ENCODE measurements at regions of chr2 and their contacts with region 1.

Region 1: DNA sequence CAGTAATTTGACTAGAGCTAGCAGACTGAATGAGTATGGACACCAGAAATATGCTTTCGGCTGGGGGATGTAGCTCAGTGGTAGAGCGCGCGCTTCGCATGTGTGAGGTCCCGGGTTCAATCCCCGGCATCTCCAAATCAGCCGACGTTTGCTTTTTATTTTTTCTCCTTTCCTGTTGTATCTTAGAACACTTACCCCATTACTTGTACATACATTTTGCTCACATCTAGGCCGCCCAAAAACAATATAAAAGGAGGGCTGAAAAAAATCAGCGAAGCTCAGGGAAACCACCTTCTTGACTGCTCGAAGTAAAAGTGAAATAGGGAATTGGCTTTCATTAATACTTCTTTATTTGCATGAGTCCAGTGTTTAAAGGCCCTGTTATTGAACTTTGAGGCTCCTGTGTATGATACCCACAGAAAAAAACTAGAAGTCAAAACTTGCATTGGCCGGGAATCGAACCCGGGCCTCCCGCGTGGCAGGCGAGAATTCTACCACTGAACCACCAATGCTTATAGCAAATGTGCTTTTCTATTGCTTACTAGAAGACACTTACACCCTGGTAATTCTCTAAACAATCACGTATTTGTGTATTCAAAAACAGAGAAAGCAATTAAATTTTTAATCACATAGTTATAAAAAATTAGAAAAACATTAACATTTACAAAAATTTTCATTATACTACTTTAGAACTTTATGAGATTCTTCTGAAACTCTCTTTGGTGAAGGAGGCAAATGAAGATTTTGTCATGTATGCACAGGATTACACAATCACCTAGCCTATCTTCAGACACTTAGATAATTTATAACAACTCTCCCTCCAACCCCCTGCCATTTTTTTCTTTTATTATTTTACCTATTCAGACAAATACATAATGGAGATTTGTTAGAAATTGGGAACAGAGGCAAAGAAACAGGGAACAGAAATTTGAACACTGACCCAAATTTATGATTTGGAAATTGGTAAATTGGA is 35.2 kb upstream of the GPD2 start:
- DNase-seq: peak; percentile 66
- ATAC-seq: peak; percentile 91 to 94

Region 2: GRCh38 chr2:156332534-156333273 is 68.3 kb before region 1 on chr2 and contains the start of gene NR4A2:
- intact Hi-C with region 1: loop called in 1 of 2 experiments (anchors 2 kb)
- DNase-seq: peak; percentile 93
- ATAC-seq: peak; percentile 72 to 81
- total RNA-seq, gene NR4A2: 2.4 to 9.2 TPM

Region 3: GRCh38 chr2:156341452-156342253 is 59.3 kb before region 1 on chr2:
- intact Hi-C with region 1: loop called (anchors 2 to 5 kb)
- DNase-seq: peak; percentile 94
- ATAC-seq: peak; percentile 90 to 93

Region 4: DNA sequence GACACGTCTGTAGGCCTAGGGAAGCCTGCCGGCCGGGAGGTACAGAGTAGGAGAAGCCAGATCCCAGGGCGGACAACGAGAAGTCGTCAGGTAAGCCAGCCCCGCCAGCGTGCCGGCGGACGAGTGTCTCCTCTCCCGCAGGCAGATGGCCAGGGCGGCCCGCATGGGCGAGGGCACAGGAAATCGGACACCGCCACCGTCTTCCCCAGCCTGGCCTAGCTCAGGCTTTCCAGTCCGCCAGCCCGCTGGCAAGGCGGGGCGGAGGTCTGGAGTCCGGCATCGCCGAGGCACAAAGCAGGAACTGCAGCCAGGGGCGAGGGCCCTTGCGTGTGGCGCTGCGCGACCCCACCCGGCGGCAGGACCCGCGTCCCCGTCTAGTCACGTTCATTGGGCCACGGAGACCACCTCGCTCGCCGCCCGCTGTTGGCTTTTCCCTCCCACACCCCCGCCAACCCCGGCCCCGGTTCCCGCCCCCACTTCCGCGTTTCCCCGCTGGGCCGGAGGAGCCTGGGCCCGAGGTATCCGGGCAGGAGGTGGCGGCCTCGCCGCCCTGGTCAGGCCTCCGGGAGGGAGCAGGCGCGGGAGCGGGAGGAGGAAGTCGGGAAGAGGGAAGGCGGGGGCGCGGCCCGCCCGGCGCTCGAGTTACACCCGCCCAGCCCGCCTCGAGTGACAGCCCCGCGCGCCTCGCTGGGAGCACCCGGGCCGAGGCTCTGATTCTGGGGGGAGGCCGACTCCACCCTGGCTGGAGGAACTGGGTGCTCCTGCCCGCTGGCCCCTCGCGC is 34.9 kb after region 1 on chr2 and contains the start of gene GPD2:
- intact Hi-C with region 1: loop called in 1 of 2 experiments (anchors 2 kb)
- DNase-seq: peak; percentile 95
- ATAC-seq: peak; percentile 95 to 99
- total RNA-seq, gene GPD2: 15.7 to 19.8 TPM

Region 5: GRCh38 chr2:156863063-156863462 is 462.1 kb after region 1 on chr2:
- intact Hi-C with region 1: no loop called
- DNase-seq: no peak
- ATAC-seq: no peak